ENCODE measurements at regions of chr19 and their contacts with region 1.

Region 1: GRCh38 chr19:8158411-8159074 is 9.2 kb upstream of the FBN3 start:
- DNase-seq: peak; percentile 57
- ATAC-seq: peak; percentile 89
- H3K4me3 ChIP-seq: no peak overlapping the region
- H3K27ac ChIP-seq: no peak overlapping the region
- H3K4me1 ChIP-seq: no peaks in the 10 kb centered on the region; the same call in 1 of the 2 replicates
- H3K27me3 ChIP-seq: no peaks in the 10 kb centered on the region
- CTCF ChIP-seq: peak; percentile 66 to 88 (median 73); a peak in 4 of 6 replicates
- EP300 ChIP-seq: no peak
- POLR2A ChIP-seq: no peak
- RAD21 ChIP-seq: peak; percentile 97

Region 2: GRCh38 chr19:8017808-8018207 is 140.7 kb before region 1 on chr19:
- CTCF ChIA-PET with region 1: interaction called, 4 read pairs
- POLR2A ChIA-PET with region 1: no interaction called
- RAD21 ChIA-PET with region 1: no interaction called
- SMC1A ChIA-PET with region 1: interaction called, 3 read pairs
- in situ Hi-C with region 1: no loop called
- intact Hi-C with region 1: loop called (anchors 2 kb)
- DNase-seq: no peak
- ATAC-seq: peak; percentile 98
- H3K4me3 ChIP-seq: no peak overlapping the region
- H3K27ac ChIP-seq: no peak overlapping the region
- H3K4me1 ChIP-seq: no peaks in the 10 kb centered on the region; the same call in 1 of the 2 replicates
- H3K27me3 ChIP-seq: no peaks in the 10 kb centered on the region
- CTCF ChIP-seq: peak; percentile 68 to 82 (median 73)
- EP300 ChIP-seq: no peak
- POLR2A ChIP-seq: no peak
- RAD21 ChIP-seq: peak; percentile 76

Region 3: DNA sequence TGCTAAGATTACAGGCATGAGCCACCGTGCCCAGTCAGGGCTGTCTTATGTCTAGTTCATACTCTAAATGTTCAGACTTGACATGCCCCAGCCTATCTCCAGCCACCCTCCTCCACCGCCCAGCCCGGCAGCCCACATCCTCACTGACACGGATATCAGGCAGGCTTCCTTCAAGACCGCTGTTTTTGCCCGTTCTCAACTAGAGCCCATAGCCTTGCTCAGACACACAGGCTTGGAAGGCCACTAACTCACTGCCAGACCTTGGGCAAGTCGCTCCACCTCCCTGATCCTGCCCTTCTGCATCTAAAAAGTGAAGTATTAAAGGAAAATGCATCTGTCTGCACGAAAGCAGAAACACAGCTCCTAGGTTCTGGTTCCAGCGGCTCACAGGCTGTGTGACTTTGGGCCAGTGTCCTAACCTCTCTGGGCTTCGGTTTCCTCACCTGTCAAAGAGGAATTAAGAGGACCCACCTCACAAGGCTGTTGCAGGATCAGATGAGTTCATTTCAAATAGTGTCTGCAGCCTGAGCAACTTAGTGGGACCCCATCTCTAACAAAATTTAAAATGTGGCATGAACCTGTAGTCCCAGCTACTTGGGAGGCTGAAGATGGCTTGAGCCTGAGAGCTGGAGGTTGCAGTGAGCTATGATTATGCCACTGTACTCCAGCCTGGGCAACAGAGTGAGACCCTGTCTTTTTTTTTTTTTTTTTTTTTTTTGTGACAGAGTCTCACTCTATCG is 36.2 kb after region 1 on chr19:
- CTCF ChIA-PET with region 1: interaction called, 20 read pairs
- POLR2A ChIA-PET with region 1: interaction called, 4 read pairs
- RAD21 ChIA-PET with region 1: interaction called, 9 read pairs
- SMC1A ChIA-PET with region 1: interaction called, 9 read pairs
- in situ Hi-C with region 1: no loop called
- intact Hi-C with region 1: loop called (anchors 1 kb)
- DNase-seq: no peak
- ATAC-seq: peak; percentile 57
- H3K4me3 ChIP-seq: peak overlapping the region; percentile 31; the same call in 1 of the 2 replicates
- H3K27ac ChIP-seq: peak overlapping the region; percentile 97
- H3K4me1 ChIP-seq: peaks cover 36% of the 10 kb centered on the region
- H3K27me3 ChIP-seq: no peaks in the 10 kb centered on the region
- CTCF ChIP-seq: no peak
- EP300 ChIP-seq: no peak
- POLR2A ChIP-seq: no peak
- RAD21 ChIP-seq: no peak

Region 4: GRCh38 chr19:8208922-8209461 is 50.4 kb after region 1 on chr19 and contains the start of gene CERS4:
- CTCF ChIA-PET with region 1: interaction called, 10 read pairs
- POLR2A ChIA-PET with region 1: interaction called, 4 read pairs
- RAD21 ChIA-PET with region 1: interaction called, 5 read pairs
- SMC1A ChIA-PET with region 1: interaction called, 8 read pairs
- in situ Hi-C with region 1: no loop called
- intact Hi-C with region 1: loop called (anchors 5 kb)
- DNase-seq: no peak
- ATAC-seq: peak; percentile 82
- H3K4me3 ChIP-seq: peak within 1 kb of the TSS; percentile 83
- H3K27ac ChIP-seq: peak within 1 kb of the TSS; percentile 95
- H3K4me1 ChIP-seq: peaks cover 13% of the 10 kb centered on the region
- H3K27me3 ChIP-seq: no peaks in the 10 kb centered on the region
- CTCF ChIP-seq: no peak
- EP300 ChIP-seq: no peak
- POLR2A ChIP-seq: no peak
- RAD21 ChIP-seq: no peak
- polyA plus RNA-seq, gene CERS4: 0.34 to 1.9 TPM

Region 5: GRCh38 chr19:8238251-8238650 is 79.7 kb after region 1 on chr19:
- CTCF ChIA-PET with region 1: interaction called, 15 read pairs
- POLR2A ChIA-PET with region 1: interaction called, 3 read pairs
- RAD21 ChIA-PET with region 1: interaction called, 3 read pairs
- SMC1A ChIA-PET with region 1: interaction called, 10 read pairs
- in situ Hi-C with region 1: no loop called
- intact Hi-C with region 1: no loop called
- DNase-seq: no peak
- ATAC-seq: no peak
- H3K4me3 ChIP-seq: no peak overlapping the region
- H3K27ac ChIP-seq: no peak overlapping the region
- H3K4me1 ChIP-seq: peaks cover 13% of the 10 kb centered on the region
- H3K27me3 ChIP-seq: no peaks in the 10 kb centered on the region
- CTCF ChIP-seq: no peak
- EP300 ChIP-seq: no peak
- POLR2A ChIP-seq: no peak
- RAD21 ChIP-seq: no peak

Region 6: DNA sequence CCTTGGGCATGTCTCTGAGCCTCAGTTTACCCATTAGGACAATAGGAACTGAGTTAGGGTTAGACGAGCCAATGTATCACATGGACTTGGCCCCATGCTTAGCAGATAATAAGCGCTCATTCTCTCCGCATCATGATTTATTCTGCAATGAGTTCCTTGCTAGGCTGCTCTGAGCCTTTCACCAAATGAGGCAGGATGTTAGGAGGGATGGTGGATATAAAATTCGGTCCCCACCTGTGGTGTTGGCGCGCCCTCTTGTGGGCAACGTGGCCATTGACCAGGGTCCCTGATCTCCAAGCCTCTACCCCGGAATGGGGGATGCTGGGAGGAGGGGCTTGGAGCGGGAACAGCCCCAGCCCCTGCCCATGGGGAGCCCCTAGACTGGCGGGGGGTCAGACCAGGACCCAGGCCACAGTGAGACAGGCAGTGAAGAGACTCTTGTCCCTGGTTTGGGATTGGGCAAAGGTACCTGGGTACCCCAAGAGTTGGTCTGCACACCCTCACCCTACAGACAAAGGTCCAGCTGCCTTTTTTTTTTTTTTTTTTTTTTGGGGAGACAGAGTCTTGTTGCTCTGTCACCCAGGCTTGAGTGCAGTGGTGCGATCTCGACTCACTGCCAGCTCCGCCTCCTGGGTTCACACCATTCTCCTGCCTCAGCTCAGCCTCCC is 94.5 kb after region 1 on chr19:
- CTCF ChIA-PET with region 1: interaction called, 42 read pairs
- POLR2A ChIA-PET with region 1: interaction called, 3 read pairs
- RAD21 ChIA-PET with region 1: interaction called, 15 read pairs
- SMC1A ChIA-PET with region 1: interaction called, 17 read pairs
- in situ Hi-C with region 1: loop called (anchors 5 kb)
- intact Hi-C with region 1: loop called (anchors 1 kb)
- DNase-seq: peak; percentile 48
- ATAC-seq: peak; percentile 98
- H3K4me3 ChIP-seq: no peak overlapping the region
- H3K27ac ChIP-seq: no peak overlapping the region
- H3K4me1 ChIP-seq: no peaks in the 10 kb centered on the region
- H3K27me3 ChIP-seq: no peaks in the 10 kb centered on the region
- CTCF ChIP-seq: peak; percentile 86 to 98 (median 87); a peak in 5 of 6 replicates
- EP300 ChIP-seq: no peak
- POLR2A ChIP-seq: no peak
- RAD21 ChIP-seq: peak; percentile 99

Measured in GM12878 (cell line).